Activated T-helper 2 cell treated with anti-CD3 and anti-CD28 coated beads, Interferon-gamma antibody, Interleukin-2, Interleukin-4, amounts not matched to agents 10 μg/mL and 5 μg/mL and 100 μg/mL, durations not matched to agents 14 hours and 24 hours and 36 hours (primary cell): ENCODE measurements at regions of chr1 and their contacts with region 1.

Region 1: GRCh38 chr1:42720868-42721267 is 19.2 kb downstream of the CLDN19 start:
- DNase-seq: no peak
- H3K4me3 Mint-ChIP-seq: no peak overlapping the region
- H3K27ac Mint-ChIP-seq: no peak overlapping the region
- H3K4me1 Mint-ChIP-seq: no peaks in the 10 kb centered on the region
- H3K27me3 Mint-ChIP-seq: peaks cover 2% of the 10 kb centered on the region

Region 2: GRCh38 chr1:42692461-42692860 is 28.4 kb before region 1 on chr1:
- intact Hi-C with region 1: loop called (anchors 1 kb)
- DNase-seq: no peak
- H3K4me3 Mint-ChIP-seq: no peak overlapping the region
- H3K27ac Mint-ChIP-seq: no peak overlapping the region
- H3K4me1 Mint-ChIP-seq: peaks cover 56% of the 10 kb centered on the region
- H3K27me3 Mint-ChIP-seq: no peaks in the 10 kb centered on the region

Region 3: GRCh38 chr1:42886800-42887199 is 165.9 kb after region 1 on chr1:
- intact Hi-C with region 1: no loop called
- DNase-seq: no peak
- H3K4me3 Mint-ChIP-seq: no peak overlapping the region
- H3K27ac Mint-ChIP-seq: no peak overlapping the region
- H3K4me1 Mint-ChIP-seq: no peaks in the 10 kb centered on the region
- H3K27me3 Mint-ChIP-seq: peaks cover 6% of the 10 kb centered on the region